H1 (cell line): ENCODE measurements at regions of chr19 and their contacts with region 1.

Region 1: DNA sequence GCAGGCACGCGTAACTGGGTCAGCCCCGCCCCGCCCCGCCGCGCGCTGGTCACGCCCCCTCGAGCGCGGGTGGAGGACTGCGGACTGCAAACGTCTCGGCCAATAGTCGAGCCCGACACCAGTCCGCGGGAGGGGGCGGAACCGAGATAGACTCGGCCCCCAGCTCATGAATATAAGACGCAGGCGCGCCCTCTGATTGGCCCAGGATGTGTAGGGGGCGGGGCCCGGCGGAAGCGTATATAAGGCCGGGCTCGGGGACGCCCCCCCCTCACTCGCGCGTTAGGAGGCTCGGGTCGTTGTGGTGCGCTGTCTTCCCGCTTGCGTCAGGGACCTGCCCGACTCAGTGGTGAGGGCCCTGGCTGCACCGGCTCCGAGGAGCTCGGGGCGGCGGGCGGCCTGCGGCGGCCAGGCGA is at the start of gene CIRBP:
- DNase-seq: peak; percentile 94 to 97
- H3K4me3 ChIP-seq: peak within 1 kb of the TSS; percentile 74 to 95 (median 90)
- H3K27ac ChIP-seq: peak within 1 kb of the TSS; percentile 98
- H3K4me1 ChIP-seq: peaks cover 4 to 54% (median 37%) of the 10 kb centered on the region in 4 experiments
- H3K27me3 ChIP-seq: peaks cover 0 to 10% (median 5%) of the 10 kb centered on the region in 4 experiments; a peak in 4 of 7 replicates
- CTCF ChIP-seq: no peak
- EP300 ChIP-seq: 0 out of 3 replicates have a peak, but pooled peaks of 1 of the 2 experiments have one; percentile 30
- POLR2A ChIP-seq: peak; percentile 100
- RAD21 ChIP-seq: no peak
- total RNA-seq, gene CIRBP: 175 TPM in 2 replicates

Region 2: GRCh38 chr19:1004803-1005664 is 264.0 kb before region 1 on chr19:
- CTCF ChIA-PET with region 1: no interaction called
- POLR2A ChIA-PET with region 1: no interaction called
- DNase-seq: no peak
- H3K4me3 ChIP-seq: no peak overlapping the region
- H3K27ac ChIP-seq: no peak overlapping the region
- H3K4me1 ChIP-seq: peaks cover 0 to 4% (median 1%) of the 10 kb centered on the region in 4 experiments; a peak in 3 of 7 replicates
- H3K27me3 ChIP-seq: peaks cover 6 to 17% (median 12%) of the 10 kb centered on the region in 4 experiments
- CTCF ChIP-seq: no peak
- EP300 ChIP-seq: no peak
- POLR2A ChIP-seq: no peak
- RAD21 ChIP-seq: no peak

Region 3: DNA sequence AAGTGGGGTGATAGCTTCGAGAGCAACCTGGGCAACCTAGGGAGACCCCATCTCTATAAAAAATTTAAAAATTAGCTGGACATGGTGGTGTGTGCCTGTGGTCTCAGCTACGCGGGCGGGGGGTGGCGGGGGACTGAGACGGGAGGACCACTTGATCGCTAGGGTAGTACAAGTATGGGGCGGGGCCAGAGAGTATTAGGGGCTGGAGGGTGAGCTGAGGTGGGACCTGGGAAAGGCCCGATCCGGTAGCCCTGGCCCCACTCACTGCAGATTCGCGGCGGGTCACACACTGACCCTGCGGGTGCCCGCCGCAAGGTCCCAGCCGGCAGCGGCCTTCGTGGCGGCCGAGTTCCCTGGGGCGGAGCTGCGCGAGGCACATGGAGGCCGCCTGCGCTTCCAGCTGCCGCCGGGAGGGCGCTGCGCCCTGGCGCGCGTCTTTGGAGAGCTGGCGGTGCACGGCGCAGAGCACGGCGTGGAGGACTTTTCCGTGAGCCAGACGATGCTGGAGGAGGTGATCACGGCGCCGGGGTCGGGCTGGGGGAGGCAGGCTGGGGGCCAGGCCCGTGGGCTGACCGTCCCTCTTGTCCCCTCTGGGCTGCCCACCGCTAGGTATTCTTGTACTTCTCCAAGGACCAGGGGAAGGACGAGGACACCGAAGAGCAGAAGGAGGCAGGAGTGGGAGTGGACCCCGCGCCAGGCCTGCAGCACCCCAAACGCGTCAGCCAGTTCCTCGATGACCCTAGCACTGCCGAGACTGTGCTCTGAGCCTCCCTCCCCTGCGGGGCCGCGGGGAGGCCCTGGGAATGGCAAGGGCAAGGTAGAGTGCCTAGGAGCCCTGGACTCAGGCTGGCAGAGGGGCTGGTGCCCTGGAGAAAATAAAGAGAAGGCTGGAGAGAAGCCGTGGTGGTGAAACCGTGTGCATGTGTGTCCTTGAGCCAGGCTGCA is 204.1 kb before region 1 on chr19:
- CTCF ChIA-PET with region 1: no interaction called
- POLR2A ChIA-PET with region 1: interaction called, 10 read pairs
- DNase-seq: peak in 1 of 2 experiments; percentile 88
- H3K4me3 ChIP-seq: peak overlapping the region in 2 of 4 experiments; percentile 9 to 54; a peak in 3 of 8 replicates
- H3K27ac ChIP-seq: no peak overlapping the region
- H3K4me1 ChIP-seq: peaks cover 0 to 27% (median 19%) of the 10 kb centered on the region in 4 experiments; a peak in 6 of 7 replicates
- H3K27me3 ChIP-seq: peaks cover 0 to 26% (median 18%) of the 10 kb centered on the region in 4 experiments; a peak in 5 of 7 replicates
- CTCF ChIP-seq: peak; percentile 65 to 86 (median 84)
- EP300 ChIP-seq: no peak
- POLR2A ChIP-seq: no peak
- RAD21 ChIP-seq: peak; percentile 38 to 60; a peak in 3 of 4 replicates

Region 4: GRCh38 chr19:1136201-1136600 is 132.9 kb before region 1 on chr19:
- CTCF ChIA-PET with region 1: no interaction called
- POLR2A ChIA-PET with region 1: no interaction called
- DNase-seq: no peak
- H3K4me3 ChIP-seq: no peak overlapping the region
- H3K27ac ChIP-seq: no peak overlapping the region
- H3K4me1 ChIP-seq: peaks cover 0 to 16% (median 7%) of the 10 kb centered on the region in 4 experiments; a peak in 6 of 7 replicates
- H3K27me3 ChIP-seq: no peaks in the 10 kb centered on the region
- CTCF ChIP-seq: no peak
- EP300 ChIP-seq: no peak
- POLR2A ChIP-seq: no peak
- RAD21 ChIP-seq: no peak

Region 5: GRCh38 chr19:1161716-1162115 is 107.4 kb before region 1 on chr19:
- CTCF ChIA-PET with region 1: no interaction called
- POLR2A ChIA-PET with region 1: no interaction called
- DNase-seq: no peak
- H3K4me3 ChIP-seq: no peak overlapping the region
- H3K27ac ChIP-seq: no peak overlapping the region
- H3K4me1 ChIP-seq: peaks cover 0 to under 1% (median 0%) of the 10 kb centered on the region in 4 experiments; a peak in 1 of 7 replicates
- H3K27me3 ChIP-seq: no peaks in the 10 kb centered on the region
- CTCF ChIP-seq: no peak
- EP300 ChIP-seq: no peak
- POLR2A ChIP-seq: no peak
- RAD21 ChIP-seq: no peak

Region 6: DNA sequence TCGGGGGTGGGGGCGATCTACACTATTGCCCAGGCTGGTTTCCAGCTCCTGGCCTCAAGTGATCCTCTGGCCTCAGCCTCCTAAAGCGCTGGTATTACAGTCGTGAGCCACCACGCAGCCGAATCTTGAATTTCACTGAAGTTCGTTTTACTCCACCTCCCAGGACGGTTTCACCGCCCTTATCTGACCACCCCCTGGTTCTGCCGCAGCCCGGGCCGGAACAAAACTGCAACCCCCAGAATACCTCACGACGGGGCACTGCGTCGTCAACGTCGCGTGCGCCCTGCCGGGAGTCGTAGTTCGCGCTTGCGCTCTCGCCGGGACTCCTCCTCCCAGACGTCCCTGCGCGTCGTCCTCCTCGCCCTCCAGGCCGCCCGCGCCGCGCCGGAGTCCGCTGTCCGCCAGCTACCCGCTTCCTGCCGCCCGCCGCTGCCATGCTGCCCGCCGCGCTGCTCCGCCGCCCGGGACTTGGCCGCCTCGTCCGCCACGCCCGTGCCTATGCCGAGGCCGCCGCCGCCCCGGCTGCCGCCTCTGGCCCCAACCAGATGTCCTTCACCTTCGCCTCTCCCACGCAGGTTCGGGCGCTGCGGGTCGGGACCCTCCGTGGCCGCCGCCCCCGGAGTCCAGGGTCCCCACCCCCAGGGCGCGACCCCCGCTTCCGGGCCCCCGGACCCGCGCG is 27.5 kb before region 1 on chr19 and contains the start of gene ATP5F1D:
- CTCF ChIA-PET with region 1: interaction called, 212 read pairs
- POLR2A ChIA-PET with region 1: interaction called, 355 read pairs
- DNase-seq: peak in 1 of 2 experiments; percentile 94
- H3K4me3 ChIP-seq: peak within 1 kb of the TSS; percentile 65 to 95 (median 67)
- H3K27ac ChIP-seq: no peak within 1 kb of the TSS
- H3K4me1 ChIP-seq: peaks cover 0 to 26% (median 10%) of the 10 kb centered on the region in 4 experiments; a peak in 5 of 7 replicates
- H3K27me3 ChIP-seq: no peaks in the 10 kb centered on the region
- CTCF ChIP-seq: no peak
- EP300 ChIP-seq: no peak
- POLR2A ChIP-seq: no peak
- RAD21 ChIP-seq: no peak
- total RNA-seq, gene ATP5F1D: 174 and 182 TPM in 2 replicates

Region 7: GRCh38 chr19:1291761-1292418 is 22.8 kb after region 1 on chr19:
- CTCF ChIA-PET with region 1: no interaction called
- POLR2A ChIA-PET with region 1: interaction called, 16 read pairs
- DNase-seq: no peak
- H3K4me3 ChIP-seq: no peak overlapping the region
- H3K27ac ChIP-seq: no peak overlapping the region
- H3K4me1 ChIP-seq: peaks cover 0 to 8% (median under 1%) of the 10 kb centered on the region in 4 experiments; a peak in 4 of 7 replicates
- H3K27me3 ChIP-seq: peaks cover 0 to 2% (median 1%) of the 10 kb centered on the region in 4 experiments; a peak in 2 of 7 replicates
- CTCF ChIP-seq: no peak
- EP300 ChIP-seq: no peak
- POLR2A ChIP-seq: no peak
- RAD21 ChIP-seq: no peak

Region 8: GRCh38 chr19:1360818-1361461 is 91.9 kb after region 1 on chr19:
- CTCF ChIA-PET with region 1: no interaction called
- POLR2A ChIA-PET with region 1: interaction called, 12 read pairs
- DNase-seq: no peak
- H3K4me3 ChIP-seq: no peak overlapping the region
- H3K27ac ChIP-seq: no peak overlapping the region
- H3K4me1 ChIP-seq: peaks cover 3 to 15% (median 13%) of the 10 kb centered on the region in 4 experiments; a peak in 6 of 7 replicates
- H3K27me3 ChIP-seq: no peaks in the 10 kb centered on the region
- CTCF ChIP-seq: no peak
- EP300 ChIP-seq: no peak
- POLR2A ChIP-seq: no peak
- RAD21 ChIP-seq: no peak

Region 9: DNA sequence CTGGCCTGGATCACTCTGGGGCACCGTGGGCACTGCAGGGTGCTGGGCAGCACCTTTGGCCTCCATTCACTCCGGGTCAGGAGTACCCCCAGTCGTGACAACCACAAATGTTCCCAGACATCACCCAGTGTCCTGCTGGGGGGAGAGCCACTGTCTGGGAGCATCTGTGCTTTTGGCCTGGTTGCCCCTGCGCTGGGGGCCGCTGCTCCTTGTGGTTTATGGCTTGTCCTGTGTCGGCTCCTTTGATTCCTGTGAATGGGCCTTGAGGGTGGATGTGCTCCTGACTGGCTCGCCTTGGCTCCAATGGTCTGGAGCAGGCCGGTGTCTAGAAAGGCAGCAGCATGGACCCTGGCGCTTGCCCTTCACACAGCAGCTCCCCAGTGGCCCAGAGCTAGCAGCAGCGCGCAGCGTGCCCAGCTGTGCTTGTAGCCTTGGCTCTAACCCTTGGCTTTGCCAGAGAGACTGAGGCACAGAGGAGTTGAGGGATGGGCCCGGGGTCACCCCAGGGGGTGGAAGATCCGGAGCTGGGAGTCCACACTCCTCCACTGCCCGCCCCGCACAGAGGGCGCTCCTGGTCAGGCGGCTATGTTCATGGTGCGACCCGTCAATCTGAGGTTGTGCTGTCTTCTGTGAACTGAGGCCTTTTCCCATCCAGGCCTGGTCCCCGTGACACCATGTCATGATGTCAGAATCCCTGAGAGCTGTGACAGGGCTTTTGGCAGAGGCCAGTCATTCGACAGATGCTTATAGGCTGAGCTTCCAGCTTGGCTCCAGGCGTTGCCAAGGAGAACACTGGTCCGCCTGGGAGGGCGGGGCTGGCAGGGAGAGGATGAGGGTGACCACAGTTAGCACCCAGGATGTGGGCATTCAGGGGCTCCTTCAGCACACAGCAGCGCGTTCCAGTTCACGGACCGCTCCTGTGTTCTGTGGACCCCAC is 142.5 kb after region 1 on chr19:
- CTCF ChIA-PET with region 1: no interaction called
- POLR2A ChIA-PET with region 1: interaction called, 12 read pairs
- DNase-seq: no peak
- H3K4me3 ChIP-seq: no peak overlapping the region
- H3K27ac ChIP-seq: peak overlapping the region; percentile 41
- H3K4me1 ChIP-seq: peaks cover 7 to 35% (median 30%) of the 10 kb centered on the region in 4 experiments
- H3K27me3 ChIP-seq: no peaks in the 10 kb centered on the region
- CTCF ChIP-seq: no peak
- EP300 ChIP-seq: no peak
- POLR2A ChIP-seq: no peak
- RAD21 ChIP-seq: no peak

Region 10: GRCh38 chr19:1632462-1633268 is 363.6 kb after region 1 on chr19:
- CTCF ChIA-PET with region 1: no interaction called
- POLR2A ChIA-PET with region 1: no interaction called
- DNase-seq: no peak
- H3K4me3 ChIP-seq: no peak overlapping the region
- H3K27ac ChIP-seq: no peak overlapping the region
- H3K4me1 ChIP-seq: no peaks in the 10 kb centered on the region
- H3K27me3 ChIP-seq: no peaks in the 10 kb centered on the region
- CTCF ChIP-seq: no peak
- EP300 ChIP-seq: no peak
- POLR2A ChIP-seq: no peak
- RAD21 ChIP-seq: no peak